GM13977 (cell line): ENCODE measurements at regions of chr16 and their contacts with region 1.

Region 1: DNA sequence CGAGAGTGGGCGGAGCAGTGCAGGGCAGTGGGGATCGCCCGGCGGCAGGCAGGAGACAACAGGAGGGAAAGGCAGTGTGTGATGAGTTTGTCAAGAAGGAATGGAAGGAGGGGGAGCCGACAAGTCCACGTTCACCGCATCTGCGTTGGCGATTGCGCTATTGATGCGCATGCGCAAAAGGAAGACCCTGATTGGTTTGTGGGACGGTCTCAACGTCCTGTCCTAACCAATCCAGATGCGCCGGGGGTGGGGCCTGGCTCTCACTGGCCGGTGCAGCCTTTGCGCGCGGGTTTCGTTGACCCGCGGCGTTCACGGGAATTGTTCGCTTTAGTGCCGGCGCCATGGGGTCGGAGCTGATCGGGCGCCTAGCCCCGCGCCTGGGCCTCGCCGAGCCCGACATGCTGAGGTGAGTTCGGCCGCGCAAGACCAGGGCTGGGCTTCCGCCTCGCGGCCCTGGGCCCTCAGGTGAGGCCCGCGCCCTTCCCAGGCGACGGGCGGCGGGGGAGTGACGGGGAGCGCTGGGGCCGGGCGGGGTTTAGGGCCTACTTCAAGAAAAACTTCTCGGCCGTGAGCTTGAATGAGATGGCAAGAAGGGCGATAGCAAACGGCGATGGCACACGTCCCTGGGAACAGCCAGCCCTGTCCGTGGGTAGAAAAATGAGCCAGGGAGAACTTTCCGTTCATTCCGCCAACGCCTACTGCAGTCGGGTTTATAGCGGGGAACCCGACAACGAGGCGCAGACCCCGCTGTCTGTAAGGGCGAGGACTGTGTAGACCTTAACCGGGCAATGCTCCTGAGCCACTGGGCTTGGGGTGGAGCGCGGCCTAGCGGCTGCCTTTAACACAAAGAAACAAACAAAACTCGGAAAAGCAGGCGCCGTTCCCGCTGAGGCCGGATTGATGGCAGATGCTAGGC is at the start of gene ORC6:
- DNase-seq: peak; percentile 95
- CTCF ChIP-seq: peak; percentile 69

Region 2: DNA sequence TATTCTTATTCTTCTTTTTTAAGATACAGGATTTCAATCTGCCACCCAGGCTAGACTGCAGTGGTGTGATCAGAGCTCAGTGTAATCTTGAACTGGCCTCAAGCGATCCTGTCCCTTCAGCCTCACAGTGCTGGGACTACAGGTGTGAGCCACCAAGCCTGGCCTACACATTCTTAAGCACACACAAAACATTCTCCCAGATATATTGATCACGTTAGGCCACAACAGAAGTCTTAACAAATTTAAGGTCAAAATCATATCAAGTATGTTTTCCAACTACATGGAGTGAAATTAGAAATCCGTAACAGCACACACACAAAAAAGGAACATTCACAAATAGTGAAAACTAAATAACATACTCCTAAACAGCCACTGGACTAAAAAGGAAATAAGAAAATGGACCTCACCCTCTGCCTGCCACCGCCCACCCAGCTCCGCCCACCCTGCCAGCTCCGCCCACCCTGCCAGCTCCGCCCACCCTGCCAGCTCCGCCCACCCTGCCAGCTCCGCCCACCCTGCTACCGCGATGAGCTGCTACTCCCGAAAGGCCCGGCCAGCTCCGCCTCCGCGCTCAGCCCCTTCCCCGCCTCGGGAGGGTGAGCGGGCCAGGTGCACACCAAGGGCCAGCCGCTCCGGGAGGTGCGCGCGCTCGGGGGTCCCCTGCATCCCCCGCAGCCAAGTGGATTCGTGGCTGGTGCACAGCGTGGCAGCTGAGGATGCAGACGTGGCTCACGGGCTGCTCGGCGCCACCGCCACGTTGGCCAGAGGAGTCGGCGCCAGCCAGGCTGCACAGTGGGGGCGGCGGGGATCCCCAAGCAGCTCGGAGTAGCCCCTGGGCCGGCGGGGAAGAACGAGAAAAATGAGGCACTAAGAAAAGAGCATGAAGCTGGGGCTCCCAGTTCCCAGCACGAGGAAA is 100.1 kb after region 1 on chr16:
- in situ Hi-C with region 1: loop called (anchors 10 kb)
- DNase-seq: peak; percentile 82
- CTCF ChIP-seq: no peak

Region 3: DNA sequence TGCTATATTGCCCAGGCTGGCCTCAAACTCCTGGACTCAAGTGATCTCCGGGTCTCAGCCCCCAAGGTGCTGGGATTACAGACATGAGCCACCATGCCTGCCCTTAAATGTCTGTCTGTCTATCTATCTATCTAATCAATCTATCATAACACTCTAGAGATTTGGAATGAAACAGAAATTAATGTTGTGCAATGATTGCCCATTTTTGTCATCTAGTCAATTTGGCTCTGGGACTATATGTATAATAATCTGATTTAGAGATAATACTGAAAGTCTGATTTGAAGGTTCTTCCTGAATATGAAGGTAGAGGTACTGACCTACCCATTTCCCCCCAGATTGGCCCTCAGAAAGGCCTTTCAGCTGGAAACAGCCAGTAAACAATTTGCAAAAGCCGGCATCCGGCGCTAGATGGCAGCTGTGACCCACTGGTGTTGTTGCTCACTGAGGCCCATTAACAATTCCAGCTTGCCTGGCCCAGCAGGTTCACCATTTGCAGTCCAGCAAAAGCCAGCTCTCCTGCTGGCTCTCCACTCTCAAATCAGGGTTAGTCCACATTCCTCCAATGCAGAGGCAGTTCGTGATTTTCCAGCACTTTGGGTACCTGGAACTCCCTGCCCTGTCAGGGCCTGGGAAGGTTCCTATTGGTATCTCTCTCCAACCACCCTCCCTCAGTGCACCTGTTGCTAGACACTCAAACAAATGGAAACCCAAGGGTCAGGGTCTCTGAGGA is 164.3 kb after region 1 on chr16:
- in situ Hi-C with region 1: no loop called
- DNase-seq: peak; percentile 79
- CTCF ChIP-seq: peak; percentile 88